Ovary (tissue), 10 donors: ENCODE measurements at regions of chr11 and their contacts with region 1.

Region 1: GRCh38 chr11:65888163-65888814 is at the start of gene FIBP:
- DNase-seq: peak; percentile 98
- H3K4me3 ChIP-seq: peak within 1 kb of the TSS; percentile 55
- H3K27ac ChIP-seq: peak within 1 kb of the TSS; percentile 91 to 95
- H3K4me1 ChIP-seq: peaks cover 21% of the 10 kb centered on the region
- H3K27me3 ChIP-seq: no peaks in the 10 kb centered on the region
- CTCF ChIP-seq: peak; percentile 91 to 99 (median 98)
- EP300 ChIP-seq: no peak
- POLR2A ChIP-seq: peak; percentile 92
- total RNA-seq, gene FIBP: 32.5 to 71.7 (median 44.2) TPM

Region 2: DNA sequence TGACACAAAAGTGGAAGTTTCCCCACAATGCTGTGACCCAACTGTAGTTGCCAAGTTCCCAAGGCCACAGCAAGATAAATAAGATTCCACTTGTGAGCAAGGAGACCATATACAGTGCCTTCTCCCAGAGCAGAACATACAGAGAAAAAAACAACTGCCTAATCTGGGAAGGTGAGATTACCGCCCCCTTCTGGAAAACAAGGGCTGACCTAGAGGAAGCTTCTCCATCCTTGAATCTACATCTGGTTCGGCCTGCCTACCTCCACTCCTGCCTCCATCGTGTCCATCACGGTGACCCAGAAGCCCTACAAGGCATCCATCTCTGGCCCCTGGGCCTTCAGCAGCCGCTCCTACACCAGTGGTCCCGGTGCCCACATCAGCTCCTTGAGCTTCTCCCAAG is 161.6 kb before region 1 on chr11:
- intact Hi-C with region 1: no loop called
- DNase-seq: no peak
- H3K4me3 ChIP-seq: no peak overlapping the region
- H3K27ac ChIP-seq: no peak overlapping the region
- H3K4me1 ChIP-seq: no peaks in the 10 kb centered on the region
- H3K27me3 ChIP-seq: no peaks in the 10 kb centered on the region
- CTCF ChIP-seq: no peak
- EP300 ChIP-seq: no peak
- POLR2A ChIP-seq: no peak

Region 3: DNA sequence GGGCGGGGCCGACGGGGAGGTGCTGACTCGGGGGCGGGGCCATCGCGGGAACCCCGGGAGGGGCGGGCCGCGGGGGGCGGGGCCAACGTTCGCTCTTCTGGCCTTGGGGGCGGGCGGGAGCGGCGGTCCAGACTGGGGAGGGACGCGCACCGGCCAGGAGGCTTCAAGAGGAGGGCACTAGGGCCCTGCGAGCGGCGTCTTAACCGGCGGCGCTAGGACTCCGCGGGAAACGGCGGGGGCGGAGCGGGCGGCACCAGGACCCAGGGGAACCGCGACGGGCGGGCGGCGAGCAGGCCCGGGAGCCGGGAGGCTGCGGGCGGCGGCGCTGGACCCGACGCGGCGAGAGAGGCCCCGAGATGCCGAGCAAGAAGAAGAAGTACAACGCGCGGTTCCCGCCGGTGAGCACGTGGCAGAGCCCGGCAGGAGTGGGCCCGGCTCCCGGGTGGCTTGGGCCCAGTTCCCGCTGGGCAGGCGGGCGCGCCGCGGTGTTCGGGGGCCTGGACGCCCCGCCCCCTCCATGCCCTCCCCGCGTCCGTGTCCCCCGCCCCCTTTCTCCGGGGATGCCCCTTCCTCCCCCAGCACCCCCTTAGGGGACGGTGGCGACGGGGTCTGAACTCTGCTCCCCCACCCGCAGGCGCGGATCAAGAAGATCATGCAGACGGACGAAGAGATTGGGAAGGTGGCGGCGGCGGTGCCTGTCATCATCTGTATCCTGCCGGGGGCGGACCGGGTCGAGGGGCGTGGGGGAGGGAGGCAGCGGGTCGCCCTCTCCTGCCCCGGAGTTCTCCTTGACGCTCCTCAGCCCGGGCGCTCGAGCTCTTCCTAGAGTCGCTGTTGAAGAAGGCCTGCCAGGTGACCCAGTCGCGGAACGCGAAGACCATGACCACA is 31.1 kb after region 1 on chr11 and contains the start of gene DRAP1:
- intact Hi-C with region 1: loop called in 1 of 4 experiments (anchors 2 kb)
- DNase-seq: peak; percentile 99
- H3K4me3 ChIP-seq: peak within 1 kb of the TSS; percentile 92
- H3K27ac ChIP-seq: peak within 1 kb of the TSS; percentile 79 to 84
- H3K4me1 ChIP-seq: peaks cover 37% of the 10 kb centered on the region
- H3K27me3 ChIP-seq: no peaks in the 10 kb centered on the region
- CTCF ChIP-seq: no peak
- EP300 ChIP-seq: no peak
- POLR2A ChIP-seq: peak; percentile 63
- total RNA-seq, gene DRAP1: 40.2 to 84.4 (median 78.3) TPM

Region 4: GRCh38 chr11:65961232-65961901 is 73.1 kb after region 1 on chr11 and contains the start of gene SART1:
- intact Hi-C with region 1: loop called in 2 of 4 experiments (anchors 5 to 10 kb)
- DNase-seq: peak; percentile 96 to 98 (median 97)
- H3K4me3 ChIP-seq: peak within 1 kb of the TSS; percentile 99
- H3K27ac ChIP-seq: peak within 1 kb of the TSS; percentile 52 to 63
- H3K4me1 ChIP-seq: peaks cover 9% of the 10 kb centered on the region
- H3K27me3 ChIP-seq: no peaks in the 10 kb centered on the region
- CTCF ChIP-seq: peak in 1 of 3 donors; percentile 25
- EP300 ChIP-seq: no peak
- POLR2A ChIP-seq: peak; percentile 46
- total RNA-seq, gene SART1: 41.4 to 64.9 (median 57.0) TPM

Region 5: DNA sequence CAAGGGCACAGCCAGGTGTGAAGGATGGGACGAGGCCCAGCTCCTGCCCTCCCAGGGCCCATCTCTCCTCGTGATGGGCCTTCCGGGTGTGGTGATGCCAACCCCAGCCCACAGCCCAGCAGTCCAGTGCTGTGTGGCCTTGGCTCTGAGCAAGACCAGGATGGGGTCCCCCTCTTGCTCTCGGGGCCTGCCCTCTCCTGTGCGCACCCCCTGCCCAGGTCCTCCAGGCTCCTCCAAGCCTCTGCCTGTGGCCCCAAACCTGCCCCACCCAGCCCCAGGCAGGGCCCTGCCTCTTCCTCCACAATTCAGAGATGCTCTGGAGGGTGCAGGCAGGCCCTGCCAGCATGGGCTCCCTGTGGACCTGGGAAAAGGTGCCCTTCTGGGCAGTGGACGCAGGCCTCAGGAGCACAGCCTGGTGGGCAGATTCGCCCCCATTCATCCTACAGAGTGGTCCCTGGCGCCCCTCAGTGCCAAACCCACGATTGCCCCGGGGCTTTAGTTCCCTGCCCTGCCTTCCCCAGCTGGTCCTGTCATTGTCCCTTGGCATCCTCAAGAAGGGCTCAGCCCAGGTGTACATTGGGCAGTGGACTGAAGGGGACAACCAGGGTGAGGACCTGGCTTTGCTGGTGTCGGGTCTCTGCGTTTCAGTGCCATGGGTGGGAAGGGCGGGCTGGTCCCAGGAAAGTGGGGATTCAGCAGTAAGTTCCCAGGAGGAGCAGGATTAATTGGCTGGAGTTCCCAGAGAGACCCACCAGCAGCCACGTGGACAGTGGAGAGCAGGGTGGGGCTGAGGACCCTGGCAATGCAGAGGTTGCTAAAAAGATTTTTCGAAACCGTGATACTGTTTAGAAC is 93.9 kb after region 1 on chr11:
- intact Hi-C with region 1: loop called in 3 of 4 experiments (anchors 5 kb)
- DNase-seq: no peak
- H3K4me3 ChIP-seq: no peak overlapping the region
- H3K27ac ChIP-seq: no peak overlapping the region
- H3K4me1 ChIP-seq: no peaks in the 10 kb centered on the region
- H3K27me3 ChIP-seq: no peaks in the 10 kb centered on the region
- CTCF ChIP-seq: no peak
- EP300 ChIP-seq: no peak
- POLR2A ChIP-seq: no peak

Region 6: DNA sequence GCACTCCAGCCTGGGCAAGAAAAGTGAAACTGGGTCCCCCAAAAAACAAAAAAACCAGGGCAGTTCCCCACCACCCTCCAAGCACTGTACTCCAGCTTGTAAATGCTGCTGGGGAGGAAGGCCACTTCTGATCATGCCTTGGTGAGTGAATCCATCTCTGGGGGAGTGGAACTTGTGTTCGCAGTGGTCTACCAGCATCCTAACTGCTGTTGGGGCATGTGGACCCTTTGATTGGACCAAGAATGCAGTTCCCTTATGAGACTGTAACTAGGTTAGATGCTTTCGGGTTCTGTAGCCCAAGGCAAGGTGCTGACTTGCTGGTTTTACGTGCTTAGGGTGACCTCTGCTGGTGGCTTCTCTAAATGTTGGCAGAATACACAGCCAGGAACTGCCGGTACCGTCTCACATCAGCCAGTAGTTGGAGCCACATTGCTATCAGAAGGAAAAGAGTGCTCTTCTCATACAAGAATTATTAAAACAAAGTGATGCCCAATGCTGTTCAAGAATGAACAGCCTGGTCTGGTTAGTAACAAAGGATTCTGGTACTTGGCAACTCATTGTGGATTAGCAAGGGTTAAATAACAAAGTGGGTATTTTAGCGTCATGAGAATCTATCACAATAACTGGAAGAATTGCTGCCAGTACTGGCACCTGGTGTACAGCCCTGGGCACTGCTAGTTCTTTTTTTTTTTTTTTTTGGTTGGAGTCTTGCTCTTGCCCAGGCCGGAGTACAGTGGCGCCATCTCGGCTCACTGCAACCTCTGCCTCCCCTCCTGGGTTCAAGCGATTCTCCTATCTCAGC is 100.7 kb after region 1 on chr11:
- intact Hi-C with region 1: loop called (anchors 2 to 5 kb)
- DNase-seq: peak; percentile 84 to 94 (median 87)
- H3K4me3 ChIP-seq: no peak overlapping the region
- H3K27ac ChIP-seq: no peak overlapping the region
- H3K4me1 ChIP-seq: no peaks in the 10 kb centered on the region
- H3K27me3 ChIP-seq: no peaks in the 10 kb centered on the region
- CTCF ChIP-seq: peak; percentile 67 to 98 (median 96)
- EP300 ChIP-seq: no peak
- POLR2A ChIP-seq: no peak

Region 7: GRCh38 chr11:66168289-66168688 is 280.0 kb after region 1 on chr11:
- intact Hi-C with region 1: no loop called
- DNase-seq: no peak
- H3K4me3 ChIP-seq: no peak overlapping the region
- H3K27ac ChIP-seq: no peak overlapping the region
- H3K4me1 ChIP-seq: peaks cover 1% of the 10 kb centered on the region
- H3K27me3 ChIP-seq: no peaks in the 10 kb centered on the region
- CTCF ChIP-seq: no peak
- EP300 ChIP-seq: no peak
- POLR2A ChIP-seq: no peak

Region 8: DNA sequence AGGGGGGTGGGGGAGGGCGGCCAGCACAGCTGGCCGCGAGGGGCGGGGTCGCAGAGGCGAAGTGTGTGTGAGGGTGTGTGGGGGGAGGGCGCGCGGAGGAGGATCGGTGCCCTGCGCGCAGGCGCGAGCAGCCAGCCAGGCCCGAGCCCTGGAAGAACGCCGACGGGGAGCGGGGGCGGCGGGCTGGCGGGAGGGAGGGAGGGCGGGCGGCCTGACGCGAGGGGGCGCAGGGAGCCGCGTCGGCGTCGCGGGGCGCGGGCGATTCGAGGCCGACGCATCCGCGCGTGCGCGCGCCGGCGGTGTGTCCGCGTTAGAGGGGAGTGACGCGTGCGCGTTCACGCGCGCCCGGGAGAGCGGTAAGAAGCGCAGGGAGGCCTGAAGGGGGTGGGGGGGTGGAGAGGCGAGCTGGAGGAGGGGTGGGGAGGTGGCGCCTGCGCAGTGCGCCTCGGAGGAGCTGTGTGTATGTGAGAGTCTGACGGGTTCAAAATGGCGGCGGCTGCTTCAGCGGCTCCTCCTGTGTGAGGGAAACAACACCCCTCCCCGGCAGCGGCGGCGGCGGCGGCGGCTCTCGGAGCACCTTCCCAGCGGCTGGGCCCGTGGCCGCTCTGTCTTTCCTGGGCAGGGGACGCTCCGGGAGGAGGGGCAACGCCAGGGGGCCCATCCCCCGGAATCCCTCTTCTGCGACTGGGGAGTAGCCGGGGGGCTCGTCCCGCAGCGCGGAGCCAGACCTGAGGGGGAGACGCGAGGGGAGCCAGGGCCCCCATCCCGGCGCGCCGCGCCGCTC is 1230.7 kb after region 1 on chr11 and contains the start of gene KDM2A:
- intact Hi-C with region 1: loop called in 1 of 4 experiments (anchors 10 kb)
- DNase-seq: peak; percentile 99 to 100 (median 99)
- H3K4me3 ChIP-seq: peak within 1 kb of the TSS; percentile 98
- H3K27ac ChIP-seq: peak within 1 kb of the TSS; percentile 98
- H3K4me1 ChIP-seq: peaks cover 3% of the 10 kb centered on the region
- H3K27me3 ChIP-seq: no peaks in the 10 kb centered on the region
- CTCF ChIP-seq: no peak
- EP300 ChIP-seq: no peak
- POLR2A ChIP-seq: peak; percentile 61
- total RNA-seq, gene KDM2A: 33.5 to 76.9 (median 59.9) TPM